SK-N-SH (cell line): ENCODE measurements at regions of chr4 and their contacts with region 1.

Region 1: GRCh38 chr4:118352843-118353533 is at the start of gene PRSS12:
- DNase-seq: peak; percentile 96
- H3K4me3 ChIP-seq: peak within 1 kb of the TSS; percentile 70 to 77
- H3K27ac ChIP-seq: peak within 1 kb of the TSS; percentile 11 to 57
- H3K4me1 ChIP-seq: peaks cover 6 to 12% of the 10 kb centered on the region in 2 experiments; a peak in 2 of 4 replicates
- H3K27me3 ChIP-seq: no peaks in the 10 kb centered on the region
- CTCF ChIP-seq: peak; percentile 70
- EP300 ChIP-seq: no peak
- RAD21 ChIP-seq: peak; percentile 60
- polyA plus RNA-seq, gene PRSS12: 134 and 137 TPM in 2 replicates

Region 2: DNA sequence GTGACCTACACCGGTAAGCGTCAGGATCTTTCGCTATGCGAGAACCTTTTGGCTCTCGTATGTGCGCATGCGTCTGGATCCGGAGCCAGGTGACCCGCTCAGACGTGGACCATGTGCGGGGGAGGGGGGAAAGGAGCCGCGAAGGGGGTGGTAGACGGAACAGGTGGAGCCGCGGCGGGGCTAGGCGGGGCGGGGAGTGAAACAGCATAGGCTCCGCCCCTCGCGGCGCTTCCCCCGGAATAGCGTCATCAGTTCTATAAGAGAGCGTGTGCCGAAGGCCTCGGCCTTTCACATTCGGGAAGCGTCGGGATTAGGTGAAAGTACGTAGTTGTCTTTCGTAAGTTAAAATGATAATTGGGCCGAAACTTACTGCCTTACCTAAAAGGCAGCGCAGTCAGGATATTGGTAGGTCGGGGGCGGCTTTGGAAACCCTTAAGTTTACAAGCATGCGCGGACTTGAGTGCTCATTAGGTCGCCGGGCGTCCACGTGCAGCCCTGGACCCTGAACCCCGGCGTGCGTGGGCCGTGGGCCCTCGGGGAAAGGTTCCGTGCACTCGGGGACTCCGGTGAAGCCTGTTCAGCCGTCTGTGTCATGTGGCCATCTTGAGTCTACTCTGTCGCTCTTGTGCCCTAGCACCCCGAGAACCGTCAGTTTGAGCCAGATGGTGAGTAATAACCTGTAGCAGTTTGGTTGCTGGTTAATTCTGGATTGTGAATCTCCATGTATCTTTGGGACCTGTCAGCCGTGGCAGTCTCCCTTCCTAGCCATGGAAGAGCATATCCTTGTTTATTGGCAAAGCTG is 74.3 kb before region 1 on chr4:
- CTCF ChIA-PET with region 1: interaction called, 69 read pairs
- POLR2A ChIA-PET with region 1: interaction called, 8 read pairs
- DNase-seq: peak; percentile 97
- H3K4me3 ChIP-seq: peak overlapping the region; percentile 79 to 96
- H3K27ac ChIP-seq: peak overlapping the region; percentile 74 to 94
- H3K4me1 ChIP-seq: peaks cover 10 to 21% of the 10 kb centered on the region in 2 experiments; a peak in 3 of 4 replicates
- H3K27me3 ChIP-seq: no peaks in the 10 kb centered on the region
- CTCF ChIP-seq: no peak
- EP300 ChIP-seq: peak in 1 of 2 experiments; percentile 40; a peak in 1 of 4 replicates
- RAD21 ChIP-seq: no peak

Region 3: DNA sequence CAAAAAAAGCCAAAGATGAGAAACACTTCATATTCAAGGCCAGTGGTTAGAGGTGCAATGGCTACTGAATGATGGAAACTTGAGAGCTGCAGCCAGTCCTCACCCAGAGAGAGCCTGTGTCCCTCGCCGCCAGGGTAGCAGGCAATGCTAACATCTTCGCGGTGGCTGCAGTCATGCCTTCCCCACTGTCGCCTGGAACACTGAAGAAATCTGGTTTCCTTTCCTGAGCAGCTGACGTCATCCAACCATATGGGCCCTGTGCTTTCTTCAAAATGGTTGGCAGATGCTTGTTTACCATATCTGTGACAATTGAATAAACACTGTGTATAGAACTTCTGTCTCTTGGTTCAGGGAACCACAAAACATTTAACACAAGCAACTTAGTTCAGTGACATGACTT is 39.9 kb before region 1 on chr4:
- CTCF ChIA-PET with region 1: interaction called, 12 read pairs
- POLR2A ChIA-PET with region 1: interaction called, 4 read pairs
- DNase-seq: no peak
- H3K4me3 ChIP-seq: no peak overlapping the region
- H3K27ac ChIP-seq: no peak overlapping the region
- H3K4me1 ChIP-seq: peaks cover 0 to 3% of the 10 kb centered on the region in 2 experiments; a peak in 2 of 4 replicates
- H3K27me3 ChIP-seq: no peaks in the 10 kb centered on the region
- CTCF ChIP-seq: no peak
- EP300 ChIP-seq: no peak
- RAD21 ChIP-seq: no peak

Region 4: GRCh38 chr4:118322831-118323502 is 30.0 kb before region 1 on chr4:
- CTCF ChIA-PET with region 1: interaction called, 10 read pairs
- POLR2A ChIA-PET with region 1: no interaction called
- DNase-seq: no peak
- H3K4me3 ChIP-seq: no peak overlapping the region
- H3K27ac ChIP-seq: peak overlapping the region; percentile 3 to 43; a peak in 2 of 4 replicates
- H3K4me1 ChIP-seq: peaks cover 0 to 7% of the 10 kb centered on the region in 2 experiments; a peak in 2 of 4 replicates
- H3K27me3 ChIP-seq: no peaks in the 10 kb centered on the region
- CTCF ChIP-seq: no peak
- EP300 ChIP-seq: peak; percentile 7 to 55; a peak in 1 of 4 replicates
- RAD21 ChIP-seq: no peak

Region 5: GRCh38 chr4:118338981-118339765 is 13.8 kb before region 1 on chr4:
- CTCF ChIA-PET with region 1: interaction called, 102 read pairs
- POLR2A ChIA-PET with region 1: interaction called, 3 read pairs
- DNase-seq: no peak
- H3K4me3 ChIP-seq: peak overlapping the region in 1 of 2 experiments; percentile 10; a peak in 1 of 4 replicates
- H3K27ac ChIP-seq: peak overlapping the region; percentile 55 to 92; a peak in 3 of 4 replicates
- H3K4me1 ChIP-seq: peaks cover 23 to 32% of the 10 kb centered on the region in 2 experiments
- H3K27me3 ChIP-seq: no peaks in the 10 kb centered on the region
- CTCF ChIP-seq: no peak
- EP300 ChIP-seq: peak in 1 of 2 experiments; percentile 79; a peak in 2 of 4 replicates
- RAD21 ChIP-seq: no peak

Region 6: DNA sequence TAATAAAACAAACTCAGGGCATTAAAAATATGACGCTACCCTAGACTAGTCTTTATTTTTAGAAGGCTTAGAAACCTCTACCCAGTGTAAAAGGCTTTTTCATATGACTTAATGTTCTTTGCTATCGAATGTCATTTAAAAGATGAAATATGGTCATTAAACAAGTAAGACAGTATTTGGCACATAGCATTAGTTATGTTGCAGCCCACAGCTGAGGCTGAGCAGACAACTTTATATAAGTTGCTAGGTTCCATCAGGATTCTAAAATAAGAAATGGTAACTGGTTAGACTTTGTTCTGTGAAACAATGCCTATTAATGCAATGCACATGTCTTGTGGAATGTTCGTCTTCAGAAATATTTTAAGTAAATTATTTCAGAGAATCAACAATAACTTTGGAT is 10.2 kb after region 1 on chr4:
- CTCF ChIA-PET with region 1: interaction called, 11 read pairs
- POLR2A ChIA-PET with region 1: interaction called, 4 read pairs
- DNase-seq: no peak
- H3K4me3 ChIP-seq: no peak overlapping the region
- H3K27ac ChIP-seq: peak overlapping the region in 1 of 2 experiments; percentile 14; a peak in 1 of 4 replicates
- H3K4me1 ChIP-seq: no peaks in the 10 kb centered on the region; a peak in 1 of 4 replicates
- H3K27me3 ChIP-seq: no peaks in the 10 kb centered on the region
- CTCF ChIP-seq: no peak
- EP300 ChIP-seq: no peak
- RAD21 ChIP-seq: no peak